ENCODE measurements at regions of chr22 and their contacts with region 1.

Region 1: DNA sequence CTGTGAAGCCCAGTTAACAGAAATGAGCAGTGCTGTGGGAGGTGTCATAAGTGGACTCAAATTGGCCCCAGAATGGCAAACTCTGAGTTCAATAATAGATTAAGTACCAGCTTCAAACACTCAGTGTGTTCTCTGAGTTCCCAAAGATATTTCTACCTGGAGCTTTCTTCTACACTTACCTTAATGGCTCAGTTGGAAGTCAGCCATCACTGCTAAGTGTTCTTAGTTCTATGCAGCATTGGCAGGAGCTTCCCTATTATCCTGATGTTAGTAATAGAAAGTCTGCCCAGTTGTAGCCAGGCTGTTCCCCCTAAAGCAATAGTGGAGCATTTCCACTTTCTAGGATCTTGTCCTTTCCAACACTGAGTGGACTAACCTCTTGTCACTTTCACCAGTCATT is 9.7 kb upstream of the PIK3IP1 start:
- DNase-seq: no peak

Region 2: DNA sequence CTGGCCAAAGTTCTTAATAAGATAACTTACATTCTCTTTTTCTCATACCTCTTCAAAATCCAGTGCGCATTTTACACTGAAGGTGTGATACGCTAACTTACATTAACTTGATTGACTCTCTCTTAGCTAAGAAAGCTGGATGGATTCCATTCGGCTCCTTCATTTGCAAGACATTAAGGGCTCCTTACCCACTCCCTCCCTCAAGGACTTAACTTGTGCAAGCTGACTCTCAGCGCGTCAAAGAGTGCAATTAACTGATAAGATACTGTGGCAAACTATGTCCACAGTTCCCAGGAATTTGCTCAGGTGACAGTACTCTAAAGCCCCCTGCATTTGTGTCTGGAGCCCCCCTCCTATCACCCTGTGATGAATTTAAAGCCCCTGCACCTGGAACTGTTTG is 1870.0 kb before region 1 on chr22:
- intact Hi-C with region 1: loop called in 1 of 2 experiments (anchors 5 kb)
- DNase-seq: no peak